Endothelial cell of umbilical vein (primary cell): ENCODE measurements at regions of chr11 and their contacts with region 1.

Region 1: GRCh38 chr11:86990515-86990914 is 35.3 kb upstream of the FZD4 start:
- DNase-seq: no peak
- H3K4me3 ChIP-seq: no peak overlapping the region
- H3K27ac ChIP-seq: no peak overlapping the region
- H3K4me1 ChIP-seq: peaks cover 10% of the 10 kb centered on the region
- H3K27me3 ChIP-seq: no peaks in the 10 kb centered on the region
- CTCF ChIP-seq: no peak
- POLR2A ChIP-seq: no peak

Region 2: DNA sequence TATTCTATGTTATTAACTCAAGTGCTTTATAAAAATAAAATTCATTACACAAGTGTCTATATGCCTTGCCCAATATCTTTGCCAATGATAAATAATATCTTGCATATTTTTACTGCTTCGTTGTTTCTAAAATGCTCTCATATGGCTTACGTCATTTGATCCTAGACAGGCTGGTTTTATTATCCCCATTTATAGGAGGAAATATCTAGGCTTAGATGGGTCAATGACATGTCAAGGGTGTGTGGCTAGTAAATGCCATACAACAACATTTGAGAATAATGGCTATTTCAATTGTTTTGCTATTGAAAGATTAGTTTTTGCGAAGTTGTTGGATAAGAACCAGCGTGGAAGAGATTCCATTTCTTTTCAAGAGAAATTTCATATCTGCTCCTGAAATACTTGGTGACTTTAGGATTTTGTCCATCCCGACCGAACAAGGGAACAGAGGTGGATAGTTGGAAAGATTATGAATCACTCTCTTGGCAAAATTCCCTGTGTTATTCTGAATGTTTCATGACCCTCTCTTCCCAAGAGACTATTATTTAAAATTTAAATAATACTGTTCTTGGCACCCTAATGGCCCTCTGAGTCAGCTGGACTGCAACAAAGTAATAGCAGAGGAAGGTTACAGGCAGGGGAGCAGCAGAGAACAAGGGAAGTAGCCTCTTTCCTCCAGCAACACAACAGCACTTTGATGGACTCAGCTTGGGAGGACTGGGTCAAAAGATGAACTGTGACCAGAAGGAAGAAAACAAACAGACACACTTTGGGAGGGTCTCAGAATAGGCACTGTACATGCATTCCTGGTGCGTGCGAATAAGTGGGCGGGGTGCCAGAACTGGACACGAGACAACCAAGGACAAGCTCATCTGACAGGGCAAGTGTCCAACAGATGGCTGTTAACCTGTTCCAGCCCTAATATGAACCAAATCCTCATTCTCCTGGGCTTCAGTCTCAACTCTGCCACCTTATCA is 412.6 kb before region 1 on chr11:
- CTCF ChIA-PET with region 1: no interaction called
- POLR2A ChIA-PET with region 1: no interaction called
- dilution Hi-C with region 1: no loop called
- intact Hi-C with region 1: no loop called
- DNase-seq: peak; percentile 98
- H3K4me3 ChIP-seq: no peak overlapping the region
- H3K27ac ChIP-seq: peak overlapping the region; percentile 63
- H3K4me1 ChIP-seq: peaks cover 59% of the 10 kb centered on the region
- H3K27me3 ChIP-seq: no peaks in the 10 kb centered on the region
- CTCF ChIP-seq: no peak
- POLR2A ChIP-seq: no peak

Region 3: DNA sequence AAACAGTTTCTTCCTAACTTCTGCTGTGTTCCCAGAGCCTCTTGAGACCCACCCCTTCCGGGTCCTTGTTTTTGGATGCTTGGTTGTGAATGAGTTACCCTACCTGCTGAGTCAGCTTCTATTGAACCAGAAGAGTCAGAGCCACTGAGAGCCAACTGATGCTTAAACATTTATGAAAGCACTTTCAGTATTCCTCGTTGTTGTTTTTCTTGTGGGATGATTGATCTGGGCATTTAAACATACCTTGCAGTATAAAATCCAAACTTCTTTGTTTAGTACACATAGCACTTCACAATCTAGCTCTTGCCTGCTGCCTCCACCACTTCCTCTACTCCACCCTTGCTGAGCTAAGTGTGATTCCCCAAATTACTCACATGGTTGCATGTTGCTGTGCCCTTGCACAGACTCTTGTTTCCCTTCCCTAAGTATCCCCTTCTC is 184.6 kb before region 1 on chr11:
- CTCF ChIA-PET with region 1: no interaction called
- POLR2A ChIA-PET with region 1: no interaction called
- dilution Hi-C with region 1: no loop called
- intact Hi-C with region 1: no loop called
- DNase-seq: peak; percentile 24
- H3K4me3 ChIP-seq: no peak overlapping the region
- H3K27ac ChIP-seq: peak overlapping the region; percentile 5
- H3K4me1 ChIP-seq: peaks cover 55% of the 10 kb centered on the region
- H3K27me3 ChIP-seq: no peaks in the 10 kb centered on the region
- CTCF ChIP-seq: no peak
- POLR2A ChIP-seq: no peak

Region 4: GRCh38 chr11:86978756-86979608 is 11.5 kb before region 1 on chr11:
- CTCF ChIA-PET with region 1: interaction called, 17 read pairs
- POLR2A ChIA-PET with region 1: no interaction called
- dilution Hi-C with region 1: no loop called
- intact Hi-C with region 1: no loop called
- DNase-seq: peak; percentile 82
- H3K4me3 ChIP-seq: no peak overlapping the region
- H3K27ac ChIP-seq: no peak overlapping the region
- H3K4me1 ChIP-seq: peaks cover 5% of the 10 kb centered on the region
- H3K27me3 ChIP-seq: no peaks in the 10 kb centered on the region
- CTCF ChIP-seq: peak; percentile 35 to 52
- POLR2A ChIP-seq: no peak

Region 5: DNA sequence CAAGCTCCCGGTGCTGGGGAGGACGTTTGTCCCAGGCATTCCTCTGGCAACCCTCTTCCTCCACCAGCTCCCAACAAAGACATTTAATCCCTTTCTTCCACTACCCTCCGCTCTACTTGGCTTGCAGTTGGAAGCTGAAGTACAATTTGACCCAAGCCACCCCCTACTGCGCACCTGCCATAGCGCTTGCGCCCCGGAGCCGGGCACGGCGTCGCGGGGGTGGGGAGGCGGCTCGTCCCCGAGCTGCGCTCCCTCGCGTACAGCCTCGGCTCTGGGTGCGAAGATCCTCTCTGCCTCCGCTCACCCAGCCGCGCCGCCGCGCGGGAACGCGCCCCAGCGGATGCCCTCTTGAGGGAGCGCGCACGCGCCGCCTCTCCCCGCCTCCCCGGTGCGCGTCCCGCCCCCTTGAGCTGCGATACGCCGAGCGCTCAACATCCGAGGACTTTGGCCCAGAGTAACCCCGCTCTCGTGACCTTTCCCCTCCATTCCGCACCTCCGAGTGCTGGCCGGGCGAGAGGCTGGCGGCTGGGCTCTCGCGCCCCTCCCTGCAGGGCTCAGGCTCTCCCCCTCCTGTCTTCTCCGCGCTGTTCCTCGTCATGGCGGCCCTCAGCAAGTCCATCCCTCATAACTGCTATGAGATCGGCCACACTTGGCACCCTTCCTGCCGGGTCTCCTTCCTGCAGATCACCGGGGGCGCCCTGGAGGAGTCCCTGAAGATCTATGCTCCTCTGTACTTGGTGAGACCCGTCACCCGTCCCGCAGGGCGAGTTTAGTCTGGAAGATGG is 47.1 kb after region 1 on chr11 and contains the start of gene TMEM135:
- CTCF ChIA-PET with region 1: interaction called, 19 read pairs
- POLR2A ChIA-PET with region 1: no interaction called
- dilution Hi-C with region 1: no loop called
- intact Hi-C with region 1: loop called (anchors 1 kb)
- DNase-seq: peak; percentile 94
- H3K4me3 ChIP-seq: peak within 1 kb of the TSS; percentile 32 to 70 (median 67)
- H3K27ac ChIP-seq: peak within 1 kb of the TSS; percentile 1
- H3K4me1 ChIP-seq: peaks cover 12% of the 10 kb centered on the region
- H3K27me3 ChIP-seq: no peaks in the 10 kb centered on the region
- CTCF ChIP-seq: no peak
- POLR2A ChIP-seq: peak; percentile 93
- total RNA-seq, gene TMEM135: 33.2 and 36.8 TPM in 2 replicates

Region 6: DNA sequence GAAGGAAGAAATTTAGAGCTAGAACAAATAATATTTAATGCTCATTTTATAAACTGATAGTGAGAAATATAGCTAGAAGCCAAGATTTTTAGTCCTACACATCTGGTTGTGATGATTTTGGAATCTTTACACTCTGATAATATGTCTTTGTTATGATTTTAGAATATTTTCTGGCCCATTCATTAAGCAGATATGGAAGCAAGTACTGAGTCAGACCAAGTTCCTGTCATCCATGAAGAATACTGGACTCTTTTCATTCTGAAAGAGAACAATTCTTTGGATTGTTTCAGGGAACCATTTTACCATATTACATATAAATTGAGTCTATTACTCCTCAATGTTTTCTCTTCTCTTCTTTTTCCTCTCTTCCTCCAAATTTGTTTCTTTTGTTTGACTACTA is 274.6 kb after region 1 on chr11:
- CTCF ChIA-PET with region 1: interaction called, 12 read pairs
- POLR2A ChIA-PET with region 1: no interaction called
- dilution Hi-C with region 1: no loop called
- intact Hi-C with region 1: no loop called
- DNase-seq: peak; percentile 52
- H3K4me3 ChIP-seq: no peak overlapping the region
- H3K27ac ChIP-seq: peak overlapping the region; percentile 13
- H3K4me1 ChIP-seq: peaks cover 39% of the 10 kb centered on the region
- H3K27me3 ChIP-seq: no peaks in the 10 kb centered on the region
- CTCF ChIP-seq: no peak
- POLR2A ChIP-seq: no peak

Region 7: GRCh38 chr11:87290304-87290922 is 299.9 kb after region 1 on chr11:
- CTCF ChIA-PET with region 1: interaction called, 26 read pairs
- POLR2A ChIA-PET with region 1: no interaction called
- dilution Hi-C with region 1: no loop called
- intact Hi-C with region 1: loop called (anchors 1 kb)
- DNase-seq: peak; percentile 75
- H3K4me3 ChIP-seq: no peak overlapping the region
- H3K27ac ChIP-seq: no peak overlapping the region
- H3K4me1 ChIP-seq: peaks cover 2% of the 10 kb centered on the region
- H3K27me3 ChIP-seq: no peaks in the 10 kb centered on the region
- CTCF ChIP-seq: peak in 1 of 2 donors; percentile 34
- POLR2A ChIP-seq: no peak